ENCODE measurements at regions of chr19 and their contacts with region 1.

Region 1: DNA sequence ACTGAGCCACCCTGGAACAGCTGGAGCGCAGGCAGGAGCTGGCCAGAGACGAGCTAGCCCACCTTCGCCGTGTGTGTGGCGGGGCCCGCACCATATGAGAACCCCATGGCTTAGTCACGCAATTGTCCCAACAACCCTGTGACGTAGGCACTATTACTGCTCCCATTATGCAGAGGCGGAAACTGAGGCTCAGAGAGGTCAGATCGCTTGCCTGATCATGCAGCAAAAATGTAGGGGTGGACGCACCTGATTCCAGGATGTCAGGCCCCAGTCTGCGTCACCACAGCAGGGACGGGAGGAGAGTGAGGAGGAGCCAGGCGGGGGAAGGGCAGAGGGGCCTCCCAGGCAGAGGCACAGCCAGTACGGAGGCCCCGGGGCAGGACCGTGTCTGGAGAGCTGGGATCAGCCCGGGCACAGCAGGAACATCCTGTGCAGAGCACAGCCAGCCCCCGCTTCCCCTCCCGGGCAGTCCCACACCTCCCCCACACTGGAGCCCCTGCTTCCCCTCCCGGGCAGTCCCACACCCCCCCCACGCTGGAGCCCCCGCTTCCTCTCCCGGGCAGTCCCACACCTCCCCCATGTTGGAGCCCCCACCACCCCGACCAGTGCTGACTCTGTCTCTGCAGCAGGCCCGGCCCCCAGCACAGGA is 16.7 kb downstream of the PIP5K1C start:
- DNase-seq: no peak
- H3K4me3 ChIP-seq: no peak overlapping the region
- H3K27ac ChIP-seq: peak overlapping the region in 1 of 2 donors; percentile 25
- H3K4me1 ChIP-seq: peaks cover 0 to 10% of the 10 kb centered on the region in 2 donors
- H3K27me3 ChIP-seq: no peaks in the 10 kb centered on the region
- CTCF ChIP-seq: no peak
- POLR2A ChIP-seq: no peak

Region 2: DNA sequence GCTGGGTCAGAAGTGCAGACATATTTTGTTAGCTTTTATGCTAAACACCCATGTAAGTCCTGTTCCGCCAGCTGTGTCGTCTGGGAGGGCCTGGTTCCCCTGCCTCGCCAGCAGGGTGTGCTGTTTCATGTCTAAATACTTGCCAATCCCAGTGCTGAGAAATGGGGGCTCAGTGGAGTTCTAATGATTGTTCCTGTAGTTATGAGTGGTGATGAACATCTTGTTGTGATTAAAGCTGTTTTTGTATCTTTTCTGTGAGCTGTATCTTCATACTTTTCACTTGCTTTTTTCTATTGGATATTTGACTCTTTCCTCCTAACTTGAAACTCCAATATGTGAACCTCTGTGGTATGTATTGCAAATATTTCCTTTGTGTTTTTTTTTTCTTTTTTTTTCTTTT is 1318.1 kb after region 1 on chr19:
- intact Hi-C with region 1: loop called (anchors 5 kb)
- DNase-seq: no peak
- H3K4me3 ChIP-seq: no peak overlapping the region
- H3K27ac ChIP-seq: peak overlapping the region in 1 of 2 donors; percentile 66
- H3K4me1 ChIP-seq: peaks cover 0 to 5% of the 10 kb centered on the region in 2 donors
- H3K27me3 ChIP-seq: no peaks in the 10 kb centered on the region
- CTCF ChIP-seq: peak in 2 of 3 donors; percentile 29 to 42
- POLR2A ChIP-seq: no peak